ENCODE measurements at regions of chr7 and their contacts with region 1.

Region 1: GRCh38 chr7:24381894-24382505 is 98.0 kb downstream of the NPY start:
- DNase-seq: no peak
- H3K4me3 ChIP-seq: no peak overlapping the region
- H3K27ac ChIP-seq: no peak overlapping the region
- H3K4me1 ChIP-seq: no peaks in the 10 kb centered on the region
- H3K27me3 ChIP-seq: no peaks in the 10 kb centered on the region
- CTCF ChIP-seq: peak; percentile 34

Region 2: GRCh38 chr7:23863209-23863798 is 518.7 kb before region 1 on chr7:
- intact Hi-C with region 1: loop called (anchors 5 kb)
- DNase-seq: no peak
- H3K4me3 ChIP-seq: no peak overlapping the region
- H3K27ac ChIP-seq: no peak overlapping the region
- H3K4me1 ChIP-seq: no peaks in the 10 kb centered on the region
- H3K27me3 ChIP-seq: no peaks in the 10 kb centered on the region
- CTCF ChIP-seq: peak; percentile 32

Region 3: DNA sequence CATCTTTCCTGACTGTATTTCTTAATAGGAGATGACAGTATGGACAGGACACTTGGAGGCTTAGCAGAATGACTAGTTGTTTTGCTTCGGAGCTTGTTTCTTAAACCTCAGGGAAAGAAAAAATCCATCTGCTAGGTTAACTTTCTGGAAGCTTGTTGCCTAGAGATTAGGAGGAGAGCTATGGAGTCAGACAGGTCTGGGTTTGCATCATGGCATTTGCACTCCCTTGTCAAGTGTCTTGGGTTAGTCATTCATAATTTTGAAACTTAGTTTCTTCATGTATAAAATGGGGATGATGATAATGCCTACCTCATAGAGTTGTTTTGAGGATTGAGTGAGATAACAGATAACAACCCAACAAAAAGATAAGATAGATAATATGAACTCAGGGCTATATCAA is 440.4 kb before region 1 on chr7:
- intact Hi-C with region 1: loop called (anchors 5 kb)
- DNase-seq: no peak
- H3K4me3 ChIP-seq: no peak overlapping the region
- H3K27ac ChIP-seq: no peak overlapping the region
- H3K4me1 ChIP-seq: no peaks in the 10 kb centered on the region
- H3K27me3 ChIP-seq: no peaks in the 10 kb centered on the region
- CTCF ChIP-seq: no peak

Region 4: DNA sequence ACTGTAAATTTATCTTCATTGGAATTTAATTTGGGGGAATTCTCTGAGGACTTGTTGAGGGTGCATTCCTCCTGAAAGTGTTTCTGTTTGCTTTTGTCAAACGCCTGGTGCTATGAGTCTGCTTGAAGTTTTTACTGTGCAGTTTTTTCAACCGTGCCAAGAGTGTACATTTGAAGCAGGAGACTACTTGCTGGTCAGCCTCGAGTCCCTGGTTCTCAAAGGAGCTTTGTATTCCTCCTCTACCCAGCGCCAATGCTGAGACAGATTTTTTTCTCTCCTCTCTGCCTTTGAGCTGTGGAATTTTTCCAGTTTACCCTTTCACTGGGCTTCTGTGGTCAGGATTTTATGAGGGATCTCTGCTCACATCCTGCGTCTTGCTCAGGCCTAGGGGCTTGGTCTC is 35.9 kb before region 1 on chr7:
- intact Hi-C with region 1: no loop called
- DNase-seq: no peak
- H3K4me3 ChIP-seq: no peak overlapping the region
- H3K27ac ChIP-seq: no peak overlapping the region
- H3K4me1 ChIP-seq: no peaks in the 10 kb centered on the region
- H3K27me3 ChIP-seq: no peaks in the 10 kb centered on the region
- CTCF ChIP-seq: no peak